Kidney (tissue), 22 donors: ENCODE measurements at regions of chr15 and their contacts with region 1.

Region 1: GRCh38 chr15:101008158-101009139 is 89.3 kb downstream of the LRRK1 start:
- DNase-seq: peak; percentile 91 to 95 (median 94)
- H3K4me3 ChIP-seq: peak overlapping the region; percentile 36 to 70 (median 37)
- H3K27ac ChIP-seq: peak overlapping the region in 1 of 2 donors; percentile 63
- H3K4me1 ChIP-seq: peaks cover 0 to 9% (median 3%) of the 10 kb centered on the region in 3 donors
- H3K27me3 ChIP-seq: no peaks in the 10 kb centered on the region
- CTCF ChIP-seq: peak; percentile 91

Region 2: DNA sequence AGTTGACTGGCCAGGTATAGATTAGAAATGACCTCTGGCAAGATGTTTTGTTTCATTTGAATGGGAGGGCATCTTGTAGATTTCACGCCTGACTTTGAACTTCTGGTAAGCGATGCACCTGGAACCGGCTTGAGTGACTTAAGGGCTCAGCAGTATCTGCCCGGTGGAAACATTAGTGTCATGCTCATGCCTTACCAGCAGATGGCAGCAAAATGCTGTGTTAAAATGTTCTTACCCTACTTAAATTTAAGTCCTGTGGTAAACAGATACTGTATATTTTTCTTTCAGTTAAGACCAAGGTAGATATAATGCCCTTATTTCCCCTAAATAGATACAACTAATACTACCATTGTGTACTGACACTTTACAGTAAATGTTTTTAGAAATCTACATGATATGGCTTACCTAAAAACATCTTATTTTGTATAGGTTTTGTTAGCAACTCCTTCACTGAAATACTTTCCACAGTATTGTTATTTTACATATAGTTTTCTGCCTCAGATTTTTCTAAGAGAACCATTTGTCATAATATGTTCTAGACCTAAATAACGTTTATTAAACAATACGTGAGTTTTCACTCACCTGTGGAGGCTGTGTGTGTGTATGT is 380.6 kb before region 1 on chr15:
- intact Hi-C with region 1: loop called (anchors 10 kb)
- DNase-seq: peak in 4 of 5 donors; percentile 72 to 89 (median 80)
- H3K4me3 ChIP-seq: no peak overlapping the region
- H3K27ac ChIP-seq: no peak overlapping the region
- H3K4me1 ChIP-seq: no peaks in the 10 kb centered on the region
- H3K27me3 ChIP-seq: no peaks in the 10 kb centered on the region
- CTCF ChIP-seq: peak; percentile 88

Region 3: DNA sequence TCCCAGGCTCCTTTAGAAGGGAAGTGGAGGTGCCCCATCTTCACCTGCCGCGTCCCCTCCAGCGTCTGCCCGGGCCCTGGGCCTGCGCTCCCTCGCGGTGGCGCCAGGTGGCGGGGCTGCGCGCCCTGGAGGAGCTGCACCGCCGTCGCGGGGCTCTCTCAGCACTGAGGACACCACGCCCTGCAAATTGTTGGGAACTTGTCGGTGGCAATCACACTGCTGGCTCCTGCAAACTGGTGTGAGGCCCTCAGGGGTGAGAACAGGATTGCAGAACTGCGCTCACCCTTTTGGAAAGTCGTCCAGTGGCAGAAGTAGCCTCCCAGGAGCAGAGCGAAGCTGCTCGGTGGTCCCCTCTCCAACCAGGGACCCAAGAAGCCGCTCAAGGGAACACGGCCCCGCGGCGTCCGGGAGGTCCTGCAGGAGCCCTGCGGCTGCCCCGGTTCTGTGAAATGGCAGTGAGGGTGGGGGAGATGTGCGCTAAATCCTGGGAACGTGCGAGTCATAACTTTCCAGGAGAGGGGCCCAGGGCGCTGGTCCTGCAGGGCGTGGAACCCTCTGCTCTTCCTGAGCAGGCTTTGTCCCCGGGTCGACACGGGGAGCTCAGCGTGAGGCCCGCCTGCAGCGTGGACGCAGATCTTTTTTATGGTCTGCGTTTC is 90.3 kb before region 1 on chr15:
- intact Hi-C with region 1: loop called (anchors 5 kb)
- DNase-seq: peak; percentile 77 to 91 (median 82)
- H3K4me3 ChIP-seq: peak overlapping the region; percentile 59 to 62 (median 59)
- H3K27ac ChIP-seq: no peak overlapping the region
- H3K4me1 ChIP-seq: no peaks in the 10 kb centered on the region
- H3K27me3 ChIP-seq: peaks cover 7% of the 10 kb centered on the region
- CTCF ChIP-seq: peak; percentile 92

Region 4: GRCh38 chr15:100940767-100941379 is 67.6 kb before region 1 on chr15:
- intact Hi-C with region 1: no loop called
- DNase-seq: no peak
- H3K4me3 ChIP-seq: no peak overlapping the region
- H3K27ac ChIP-seq: no peak overlapping the region
- H3K4me1 ChIP-seq: peaks cover 0 to 2% (median 0%) of the 10 kb centered on the region in 3 donors
- H3K27me3 ChIP-seq: no peaks in the 10 kb centered on the region
- CTCF ChIP-seq: no peak